Lower lobe of right lung (tissue), 2 donors: ENCODE measurements at regions of chr16 and their contacts with region 1.

Region 1: GRCh38 chr16:11407047-11407982 is 62.1 kb downstream of the RMI2 start:
- DNase-seq: no peak
- ATAC-seq: peak; percentile 79 to 83
- H3K4me3 ChIP-seq: no peak overlapping the region
- H3K27ac ChIP-seq: no peak overlapping the region
- H3K4me1 ChIP-seq: no peaks in the 10 kb centered on the region
- H3K27me3 ChIP-seq: no peaks in the 10 kb centered on the region
- CTCF ChIP-seq: peak; percentile 72

Region 2: GRCh38 chr16:11283820-11284248 is 123.5 kb before region 1 on chr16:
- intact Hi-C with region 1: no loop called
- DNase-seq: no peak
- ATAC-seq: peak in 1 of 2 donors; percentile 32
- H3K4me3 ChIP-seq: no peak overlapping the region
- H3K27ac ChIP-seq: no peak overlapping the region
- H3K4me1 ChIP-seq: no peaks in the 10 kb centered on the region
- H3K27me3 ChIP-seq: no peaks in the 10 kb centered on the region
- CTCF ChIP-seq: no peak

Region 3: GRCh38 chr16:11327277-11328171 is 79.8 kb before region 1 on chr16:
- intact Hi-C with region 1: no loop called
- DNase-seq: no peak
- ATAC-seq: peak in 1 of 2 donors; percentile 32
- H3K4me3 ChIP-seq: no peak overlapping the region
- H3K27ac ChIP-seq: peak overlapping the region; percentile 51
- H3K4me1 ChIP-seq: peaks cover 23% of the 10 kb centered on the region
- H3K27me3 ChIP-seq: no peaks in the 10 kb centered on the region
- CTCF ChIP-seq: no peak

Region 4: DNA sequence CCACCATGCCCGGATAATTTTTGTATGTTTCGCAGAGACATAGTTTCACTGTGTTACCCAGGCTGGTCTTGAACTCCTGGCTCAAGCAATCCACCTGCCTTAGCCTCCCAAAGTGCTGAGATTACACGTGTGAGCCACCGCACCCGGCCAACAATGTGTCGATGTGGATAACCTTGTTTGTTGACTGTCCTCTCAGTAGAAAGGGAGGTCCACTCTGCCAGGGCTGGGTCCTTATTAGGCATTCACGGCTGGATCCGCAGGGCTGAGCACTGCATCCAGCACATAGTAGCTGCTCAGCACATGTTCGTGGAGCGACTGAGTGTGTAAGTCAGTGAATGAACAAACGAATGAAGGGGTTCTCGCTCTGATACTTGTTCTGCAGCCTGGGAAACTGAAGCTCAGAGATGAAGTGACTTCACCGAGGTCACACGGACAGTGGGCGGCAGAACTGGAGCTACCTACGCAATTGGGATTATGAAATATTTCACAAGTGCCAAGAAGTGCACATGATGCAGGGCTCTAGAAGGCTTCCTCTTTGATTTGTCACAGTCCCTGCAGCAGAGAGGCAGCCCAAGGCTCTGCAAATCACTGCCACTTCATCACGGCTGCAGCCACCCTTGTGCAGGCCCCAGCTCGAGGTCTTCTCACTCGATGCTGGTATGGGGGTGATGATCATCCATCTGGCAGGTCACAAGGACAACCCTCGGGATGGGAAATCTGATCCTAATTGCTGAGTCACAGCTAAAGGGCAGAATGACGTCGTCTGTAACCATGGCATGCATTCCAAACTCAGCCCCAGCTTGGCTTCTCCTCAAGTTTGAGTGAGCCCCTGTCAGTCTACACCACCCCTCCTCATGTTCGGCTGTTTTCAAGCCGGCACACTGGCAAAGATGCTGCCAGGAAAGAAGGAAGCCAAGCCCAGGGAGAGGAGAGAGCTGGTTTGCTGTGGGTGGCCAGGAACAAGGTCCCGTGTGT is 232.9 kb after region 1 on chr16:
- intact Hi-C with region 1: loop called (anchors 10 kb)
- DNase-seq: peak; percentile 89
- ATAC-seq: peak; percentile 90
- H3K4me3 ChIP-seq: peak overlapping the region; percentile 17
- H3K27ac ChIP-seq: peak overlapping the region; percentile 88
- H3K4me1 ChIP-seq: peaks cover 22% of the 10 kb centered on the region
- H3K27me3 ChIP-seq: no peaks in the 10 kb centered on the region
- CTCF ChIP-seq: no peak

Region 5: GRCh38 chr16:11715246-11715947 is 308.1 kb after region 1 on chr16:
- intact Hi-C with region 1: loop called (anchors 10 kb)
- DNase-seq: no peak
- ATAC-seq: no peak
- H3K4me3 ChIP-seq: no peak overlapping the region
- H3K27ac ChIP-seq: no peak overlapping the region
- H3K4me1 ChIP-seq: peaks cover 31% of the 10 kb centered on the region
- H3K27me3 ChIP-seq: no peaks in the 10 kb centered on the region
- CTCF ChIP-seq: no peak